Endothelial cell of umbilical vein (primary cell): ENCODE measurements at regions of chr11 and their contacts with region 1.

Region 1: DNA sequence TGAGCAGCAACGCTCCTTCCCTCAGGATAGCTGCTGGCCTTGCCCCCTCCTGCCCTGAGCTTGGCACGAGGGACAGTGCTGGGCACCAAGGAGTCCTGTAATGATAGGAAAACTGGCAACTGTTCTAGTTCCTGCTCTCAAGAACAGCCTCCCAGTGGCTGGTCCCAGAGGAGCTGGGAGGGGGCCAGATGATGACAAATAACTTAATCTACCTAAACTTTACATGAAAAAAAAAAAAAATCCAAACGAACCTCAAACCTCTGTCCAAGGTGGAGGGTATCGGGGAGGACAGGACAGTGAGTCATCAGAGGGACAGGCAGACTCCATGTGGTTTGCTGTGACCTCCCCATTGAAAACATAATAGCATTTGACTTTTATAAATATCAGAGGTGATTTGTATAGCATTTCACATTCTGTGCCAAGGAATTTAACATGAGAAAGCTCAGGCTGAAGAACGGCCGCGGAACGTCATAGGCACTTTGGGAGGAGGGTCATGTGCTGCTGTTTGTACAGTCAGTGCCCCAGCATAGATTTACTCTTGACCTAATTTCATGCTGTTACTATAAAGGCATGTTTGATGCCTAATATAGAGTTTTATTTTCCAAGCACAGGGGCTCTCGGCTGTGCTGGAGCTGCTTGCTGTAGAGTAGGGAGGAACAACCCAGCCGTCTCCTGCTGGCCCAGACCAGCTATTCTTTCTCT is 98.2 kb upstream of the NNMT start:
- DNase-seq: peak; percentile 96
- H3K4me3 ChIP-seq: no peak overlapping the region
- H3K27ac ChIP-seq: peak overlapping the region; percentile 83
- H3K4me1 ChIP-seq: peaks cover 26% of the 10 kb centered on the region
- H3K27me3 ChIP-seq: no peaks in the 10 kb centered on the region
- CTCF ChIP-seq: no peak
- POLR2A ChIP-seq: peak; percentile 21

Region 2: GRCh38 chr11:113426686-113427085 is 771.3 kb before region 1 on chr11:
- CTCF ChIA-PET with region 1: no interaction called
- POLR2A ChIA-PET with region 1: no interaction called
- dilution Hi-C with region 1: no loop called
- intact Hi-C with region 1: no loop called
- DNase-seq: no peak
- H3K4me3 ChIP-seq: no peak overlapping the region
- H3K27ac ChIP-seq: no peak overlapping the region
- H3K4me1 ChIP-seq: no peaks in the 10 kb centered on the region
- H3K27me3 ChIP-seq: no peaks in the 10 kb centered on the region
- CTCF ChIP-seq: no peak
- POLR2A ChIP-seq: no peak

Region 3: GRCh38 chr11:114219559-114220349 is 21.8 kb after region 1 on chr11:
- CTCF ChIA-PET with region 1: interaction called, 9 read pairs
- POLR2A ChIA-PET with region 1: interaction called, 9 read pairs
- dilution Hi-C with region 1: no loop called
- intact Hi-C with region 1: loop called (anchors 1 kb)
- DNase-seq: peak; percentile 95
- H3K4me3 ChIP-seq: no peak overlapping the region
- H3K27ac ChIP-seq: peak overlapping the region; percentile 83
- H3K4me1 ChIP-seq: peaks cover 17% of the 10 kb centered on the region
- H3K27me3 ChIP-seq: no peaks in the 10 kb centered on the region
- CTCF ChIP-seq: no peak
- POLR2A ChIP-seq: peak; percentile 42